Left cardiac atrium (tissue), 4 donors: ENCODE measurements at regions of chr12 and their contacts with region 1.

Region 1: GRCh38 chr12:6533923-6534694 is at the start of gene GAPDH:
- DNase-seq: peak; percentile 95
- ATAC-seq: peak; percentile 82 to 84
- total RNA-seq, gene GAPDH: 3,044 to 4,078 TPM

Region 2: GRCh38 chr12:6335451-6336078 is 198.5 kb before region 1 on chr12:
- intact Hi-C with region 1: loop called in 1 of 2 experiments (anchors 10 kb)
- DNase-seq: peak; percentile 87
- ATAC-seq: peak; percentile 36 to 51

Region 3: GRCh38 chr12:6493497-6494257 is 40.4 kb before region 1 on chr12 and contains the start of gene NCAPD2:
- intact Hi-C with region 1: loop called in 1 of 2 experiments (anchors 5 kb)
- DNase-seq: peak; percentile 96
- ATAC-seq: peak; percentile 97 to 98
- total RNA-seq, gene NCAPD2: 12.4 to 15.8 TPM

Region 4: GRCh38 chr12:6553051-6553868 is 19.2 kb after region 1 on chr12:
- intact Hi-C with region 1: loop called in 1 of 2 experiments (anchors 2 kb)
- DNase-seq: peak; percentile 51
- ATAC-seq: peak; percentile 23 to 36

Region 5: DNA sequence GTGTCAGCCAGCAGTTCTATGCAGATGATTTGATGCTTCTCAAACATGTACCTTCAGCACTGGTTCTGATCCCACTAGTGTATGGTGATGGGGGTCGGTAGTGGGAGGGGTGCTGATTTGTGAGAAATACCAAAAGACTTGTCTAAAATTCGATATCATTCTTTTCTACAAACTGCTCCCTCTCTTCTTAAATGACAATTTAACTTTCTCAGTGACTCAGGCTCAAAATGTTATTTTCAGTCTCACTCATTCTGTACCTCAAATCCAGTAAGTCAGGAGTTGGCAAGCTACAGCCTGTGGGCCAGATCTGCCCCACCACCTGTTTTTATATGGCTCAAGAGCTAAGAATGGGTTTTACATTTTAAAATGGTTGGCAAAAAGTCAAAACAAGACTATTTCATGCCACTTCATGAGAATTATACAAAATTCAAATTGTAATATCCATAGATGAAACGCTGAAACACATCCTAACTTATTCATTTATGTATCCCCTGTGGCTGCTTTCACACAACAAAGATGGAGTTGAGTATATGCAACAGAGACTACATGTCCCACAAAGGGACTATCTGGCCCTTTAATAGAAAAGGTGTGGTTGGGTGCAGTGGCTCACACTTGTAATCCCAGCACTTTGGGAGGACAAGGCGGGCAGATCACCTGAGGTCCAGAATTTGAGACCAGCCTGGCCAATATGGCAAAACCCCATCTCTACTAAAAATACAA is 40.6 kb after region 1 on chr12:
- intact Hi-C with region 1: no loop called
- DNase-seq: no peak
- ATAC-seq: no peak